ENCODE measurements at regions of chr5 and their contacts with region 1.

Region 1: DNA sequence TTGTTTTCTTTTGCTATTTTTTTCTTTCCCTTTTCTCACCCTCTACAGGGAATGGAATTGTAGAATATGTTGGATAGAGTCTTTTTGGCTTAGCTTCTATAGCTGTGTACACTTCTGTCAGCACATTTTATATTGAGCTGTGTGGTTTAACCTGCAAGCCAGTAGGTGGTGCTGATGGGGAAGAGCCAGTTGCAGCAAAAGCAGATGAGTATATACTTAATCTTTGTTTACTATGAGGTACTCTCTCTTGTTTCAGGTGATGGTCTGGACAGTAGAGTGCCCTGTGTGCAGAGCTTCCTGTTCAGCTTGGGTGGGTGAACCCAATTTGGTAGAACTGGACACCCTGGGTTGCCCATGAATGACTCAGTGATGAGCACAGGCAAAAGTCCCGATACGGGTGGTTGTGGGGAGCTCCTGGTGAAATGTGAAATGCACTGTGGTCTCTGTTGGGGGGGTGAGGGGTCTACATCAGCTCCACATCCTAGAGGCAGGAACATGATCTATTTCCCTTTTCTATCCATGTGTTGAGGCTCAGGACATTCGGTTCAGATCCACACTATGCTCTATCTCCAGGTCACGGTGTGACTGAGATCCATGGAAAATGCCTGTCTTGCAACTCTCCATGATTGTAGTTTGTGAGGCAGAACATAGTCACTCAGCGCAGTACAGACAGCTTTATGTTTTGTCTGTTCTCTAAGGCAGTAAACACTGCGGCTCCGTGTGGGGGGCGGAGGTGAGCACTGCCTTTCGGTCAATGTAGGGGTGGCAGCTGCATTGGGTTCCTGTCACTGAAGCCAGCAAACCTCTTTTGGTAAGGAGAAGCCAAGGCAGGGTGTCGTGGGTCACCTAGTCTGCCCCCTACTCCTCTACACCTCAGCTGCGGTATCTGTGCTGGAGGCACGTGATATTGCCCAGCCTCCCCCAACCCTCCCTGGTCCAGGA is 353.2 kb downstream of the PRR16 start:
- ATAC-seq: peak in 4 of 8 experiments; percentile 62 to 85 (median 76)
- H3K4me3 ChIP-seq: no peak overlapping the region
- H3K27ac ChIP-seq: no peak overlapping the region
- H3K4me1 ChIP-seq: no peaks in the 10 kb centered on the region

Region 2: DNA sequence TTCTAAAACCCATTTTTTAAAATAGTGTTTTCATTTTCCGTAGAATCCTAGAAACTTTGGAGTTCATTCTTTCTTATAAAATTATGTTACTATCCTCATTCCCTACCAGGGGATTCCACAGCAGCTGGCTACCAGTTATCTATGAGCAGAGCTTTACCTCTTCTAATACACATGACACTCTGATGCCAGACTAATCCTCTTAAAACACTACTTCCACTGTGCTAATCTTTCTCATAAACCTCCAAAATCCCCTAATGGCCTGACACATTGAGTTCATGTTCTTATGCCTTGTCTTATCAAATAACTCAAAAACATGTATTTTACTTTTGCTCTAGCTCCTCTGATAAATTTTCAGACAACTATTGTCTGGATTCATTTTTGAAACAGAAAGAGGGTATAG is 400.8 kb after region 1 on chr5:
- in situ Hi-C with region 1: no loop called
- ATAC-seq: no peak
- H3K4me3 ChIP-seq: no peak overlapping the region
- H3K27ac ChIP-seq: no peak overlapping the region
- H3K4me1 ChIP-seq: no peaks in the 10 kb centered on the region

Region 3: GRCh38 chr5:121890297-121890858 is 1073.1 kb after region 1 on chr5:
- in situ Hi-C with region 1: loop called in 1 of 9 experiments (anchors 25 kb)
- ATAC-seq: no peak
- H3K4me3 ChIP-seq: no peak overlapping the region
- H3K27ac ChIP-seq: no peak overlapping the region
- H3K4me1 ChIP-seq: no peaks in the 10 kb centered on the region